Activated T-helper 1 cell treated with anti-CD3 and anti-CD28 coated beads, Interleukin-12 subunit alpha, Interleukin-12 subunit beta, Interleukin-2, Interleukin-4 antibody, amounts not matched to agents 30 ng/mL and 10 ng/mL and 1 ng/mL, durations not matched to agents 14 hours and 24 hours and 36 hours (primary cell): ENCODE measurements at regions of chr10 and their contacts with region 1.

Region 1: DNA sequence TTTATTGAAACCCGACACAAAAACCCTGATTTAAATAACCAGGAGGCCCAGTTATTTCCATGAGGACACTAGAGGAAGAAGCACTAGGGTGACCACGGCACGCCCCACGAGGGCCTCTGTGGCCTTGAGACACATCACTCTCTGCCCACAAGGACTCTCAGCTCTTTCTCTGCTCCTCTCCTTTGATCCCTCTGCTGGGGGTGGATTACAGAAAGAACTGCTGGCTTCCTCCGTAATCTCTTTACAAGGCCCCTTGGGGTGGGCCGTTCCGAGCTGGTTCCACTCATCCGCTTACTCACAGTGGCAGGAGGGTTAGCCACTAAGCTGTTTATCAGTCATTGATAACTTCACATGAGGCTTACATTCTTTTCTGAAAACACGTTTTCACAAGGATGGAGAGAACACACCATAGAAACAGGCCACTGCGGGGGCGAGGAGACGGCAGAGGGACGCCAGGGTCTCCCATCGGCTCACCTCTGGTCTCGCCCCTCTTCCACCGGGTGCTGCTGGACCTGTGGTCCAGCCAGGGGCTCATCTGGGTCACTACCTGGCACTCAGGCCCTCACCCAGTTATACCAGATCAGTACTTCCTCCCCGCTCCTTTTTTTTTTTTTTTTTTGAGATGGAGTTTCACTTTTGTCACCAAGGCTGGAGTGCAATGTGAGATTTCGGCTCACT is 17.6 kb upstream of the PFKFB3 start:
- DNase-seq: no peak
- H3K4me3 Mint-ChIP-seq: peak overlapping the region; percentile 19
- H3K27ac Mint-ChIP-seq: peak overlapping the region; percentile 9
- H3K4me1 Mint-ChIP-seq: peaks cover 39% of the 10 kb centered on the region
- H3K27me3 Mint-ChIP-seq: no peaks in the 10 kb centered on the region

Region 2: DNA sequence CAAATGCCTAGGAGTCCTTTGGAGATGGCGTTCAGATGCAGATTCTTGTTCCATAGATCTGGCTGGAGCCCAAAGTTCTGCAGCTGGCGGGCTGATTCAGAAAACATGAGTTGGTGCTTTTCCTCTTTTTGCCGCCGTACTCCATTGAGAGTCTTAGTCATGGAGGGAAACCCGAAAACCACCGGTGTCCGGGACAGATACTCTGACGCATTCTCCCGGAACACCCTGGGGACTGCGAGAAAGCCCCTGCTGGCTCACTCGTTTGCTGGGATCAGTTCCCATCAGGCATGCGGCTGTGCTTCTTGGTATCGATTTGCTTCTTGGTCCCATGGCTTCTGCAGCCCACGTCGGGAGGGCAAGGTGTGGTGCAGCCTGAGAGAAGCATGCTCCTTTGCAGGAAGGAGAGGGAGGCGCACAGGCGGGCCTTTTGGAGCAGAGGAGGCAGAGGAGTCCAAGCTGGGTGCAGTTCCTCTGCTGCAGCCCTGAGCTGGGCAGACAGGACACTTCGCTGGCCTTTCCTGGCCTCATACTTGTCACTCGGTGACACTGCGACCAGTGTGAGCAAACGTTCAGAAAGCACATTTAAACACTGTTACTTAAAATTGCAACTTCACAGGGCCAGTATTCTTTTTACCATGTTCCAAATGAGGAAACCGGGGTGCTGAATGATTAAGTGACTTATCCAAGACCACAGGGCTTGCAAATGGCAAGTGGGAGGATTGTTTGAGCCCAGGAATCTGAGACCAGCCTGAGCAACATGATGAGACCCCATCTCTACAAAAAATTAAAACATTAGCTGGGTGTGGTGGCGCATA is 13.1 kb before region 1 on chr10:
- intact Hi-C with region 1: loop called (anchors 2 kb)
- DNase-seq: peak; percentile 16
- H3K4me3 Mint-ChIP-seq: peak overlapping the region; percentile 66
- H3K27ac Mint-ChIP-seq: peak overlapping the region; percentile 79
- H3K4me1 Mint-ChIP-seq: peaks cover 85% of the 10 kb centered on the region
- H3K27me3 Mint-ChIP-seq: no peaks in the 10 kb centered on the region

Region 3: DNA sequence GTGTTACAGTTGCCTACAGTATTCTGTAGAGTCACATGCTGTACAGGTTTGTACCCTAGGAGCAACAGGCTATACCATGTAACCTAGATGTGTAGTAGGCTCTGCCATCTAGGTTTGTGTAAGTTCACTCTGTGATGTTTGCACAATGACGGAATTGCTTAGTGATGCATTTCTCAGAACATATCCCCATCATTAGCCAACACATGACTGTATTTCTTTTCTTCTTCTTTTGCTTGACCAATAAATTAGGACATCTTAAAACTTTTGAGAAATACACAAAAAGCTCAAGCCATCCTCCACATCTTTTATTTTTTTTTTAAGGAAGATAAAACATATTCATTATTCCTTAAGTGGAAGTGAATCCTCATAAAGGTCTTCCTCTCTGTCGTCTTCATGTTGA is 12.1 kb after region 1 on chr10:
- intact Hi-C with region 1: loop called (anchors 1 kb)
- DNase-seq: no peak
- H3K4me3 Mint-ChIP-seq: no peak overlapping the region
- H3K27ac Mint-ChIP-seq: no peak overlapping the region
- H3K4me1 Mint-ChIP-seq: peaks cover 50% of the 10 kb centered on the region
- H3K27me3 Mint-ChIP-seq: no peaks in the 10 kb centered on the region